HEK293 (cell line): ENCODE measurements at regions of chr1 and their contacts with region 1.

Region 1: GRCh38 chr1:208025031-208025430 is 114.1 kb upstream of the CD34 start:
- H3K4me3 ChIP-seq: no peak overlapping the region
- H3K27ac ChIP-seq: no peak overlapping the region
- H3K4me1 ChIP-seq: no peaks in the 10 kb centered on the region
- CTCF ChIP-seq: no peak

Region 2: DNA sequence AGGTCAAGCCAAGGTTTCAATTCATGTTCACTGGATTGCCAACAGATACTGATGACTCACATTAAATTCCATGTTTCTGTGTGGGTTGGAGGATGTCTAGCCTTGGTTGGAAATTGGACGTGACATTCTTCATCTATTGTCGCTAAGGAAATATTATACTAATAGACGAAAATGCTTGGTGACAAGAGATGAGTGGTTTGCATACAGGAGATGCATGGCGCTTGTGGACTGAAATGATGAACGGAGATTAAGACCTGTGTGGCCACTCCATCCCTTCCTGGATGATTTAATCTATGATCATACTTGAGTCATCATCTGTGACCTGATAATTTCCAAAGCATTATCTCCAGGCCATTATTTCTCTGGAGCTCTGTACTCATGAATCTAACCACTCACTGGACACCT is 17.1 kb before region 1 on chr1:
- CTCF ChIA-PET with region 1: interaction called, 35 read pairs
- POLR2A ChIA-PET with region 1: no interaction called
- H3K4me3 ChIP-seq: no peak overlapping the region
- H3K27ac ChIP-seq: no peak overlapping the region
- H3K4me1 ChIP-seq: no peaks in the 10 kb centered on the region
- CTCF ChIP-seq: no peak

Region 3: GRCh38 chr1:208093754-208094719 is 69.0 kb after region 1 on chr1:
- CTCF ChIA-PET with region 1: interaction called, 26 read pairs
- POLR2A ChIA-PET with region 1: no interaction called
- H3K4me3 ChIP-seq: no peak overlapping the region
- H3K27ac ChIP-seq: no peak overlapping the region
- H3K4me1 ChIP-seq: no peaks in the 10 kb centered on the region
- CTCF ChIP-seq: peak; percentile 45; the same call in 1 of the 2 replicates

Region 4: DNA sequence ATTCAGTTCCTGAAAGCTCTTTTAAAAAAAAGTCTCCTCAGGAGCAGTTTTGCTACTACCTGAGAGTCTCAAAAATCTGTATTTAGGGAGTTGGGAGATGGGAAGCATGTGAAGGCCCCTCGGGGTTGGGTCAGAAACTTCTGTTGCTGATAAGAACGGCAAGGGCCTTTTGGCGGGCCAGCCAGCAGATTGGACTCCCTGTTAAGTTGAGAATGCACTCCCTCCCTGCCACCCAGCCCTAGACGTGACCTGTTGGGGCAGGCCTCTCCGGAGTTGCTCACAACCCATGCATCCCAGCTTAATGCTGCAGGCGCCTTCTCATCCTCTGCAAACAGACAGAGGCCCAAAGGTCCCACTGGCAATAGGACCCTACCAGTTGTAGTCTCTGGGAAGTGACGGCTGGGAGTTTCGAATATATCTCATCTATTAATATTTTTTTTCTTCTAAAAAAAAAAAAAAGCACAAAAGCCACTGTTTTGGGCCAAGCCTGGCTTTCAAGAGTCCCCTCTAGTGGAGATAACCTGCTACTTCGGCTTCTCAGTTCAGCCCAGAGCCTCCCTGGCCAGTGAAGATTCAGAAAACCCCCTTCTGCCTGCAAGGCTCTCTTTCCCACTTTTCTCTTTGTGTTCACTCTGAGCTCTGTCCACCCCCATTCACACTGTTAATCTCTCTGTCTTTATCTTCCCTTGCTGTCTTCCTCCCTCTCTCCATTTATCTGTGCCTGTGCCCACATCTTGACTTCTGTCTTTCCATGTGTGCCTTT is 213.9 kb after region 1 on chr1:
- CTCF ChIA-PET with region 1: interaction called, 98 read pairs
- POLR2A ChIA-PET with region 1: interaction called, 24 read pairs
- H3K4me3 ChIP-seq: no peak overlapping the region
- H3K27ac ChIP-seq: no peak overlapping the region
- H3K4me1 ChIP-seq: peaks cover 6% of the 10 kb centered on the region; the same call in 1 of the 2 replicates
- CTCF ChIP-seq: no peak

Region 5: GRCh38 chr1:209207701-209208286 is 1182.8 kb after region 1 on chr1:
- CTCF ChIA-PET with region 1: interaction called, 13 read pairs
- POLR2A ChIA-PET with region 1: no interaction called
- H3K4me3 ChIP-seq: peak overlapping the region; percentile 43
- H3K27ac ChIP-seq: no peak overlapping the region
- H3K4me1 ChIP-seq: no peaks in the 10 kb centered on the region
- CTCF ChIP-seq: peak; percentile 88